Activated T-helper 2 cell treated with anti-CD3 and anti-CD28 coated beads, Interferon-gamma antibody, Interleukin-2, Interleukin-4, amounts not matched to agents 10 μg/mL and 5 μg/mL and 100 μg/mL, durations not matched to agents 14 hours and 24 hours and 36 hours (primary cell): ENCODE measurements at regions of chr6 and their contacts with region 1.

Region 1: DNA sequence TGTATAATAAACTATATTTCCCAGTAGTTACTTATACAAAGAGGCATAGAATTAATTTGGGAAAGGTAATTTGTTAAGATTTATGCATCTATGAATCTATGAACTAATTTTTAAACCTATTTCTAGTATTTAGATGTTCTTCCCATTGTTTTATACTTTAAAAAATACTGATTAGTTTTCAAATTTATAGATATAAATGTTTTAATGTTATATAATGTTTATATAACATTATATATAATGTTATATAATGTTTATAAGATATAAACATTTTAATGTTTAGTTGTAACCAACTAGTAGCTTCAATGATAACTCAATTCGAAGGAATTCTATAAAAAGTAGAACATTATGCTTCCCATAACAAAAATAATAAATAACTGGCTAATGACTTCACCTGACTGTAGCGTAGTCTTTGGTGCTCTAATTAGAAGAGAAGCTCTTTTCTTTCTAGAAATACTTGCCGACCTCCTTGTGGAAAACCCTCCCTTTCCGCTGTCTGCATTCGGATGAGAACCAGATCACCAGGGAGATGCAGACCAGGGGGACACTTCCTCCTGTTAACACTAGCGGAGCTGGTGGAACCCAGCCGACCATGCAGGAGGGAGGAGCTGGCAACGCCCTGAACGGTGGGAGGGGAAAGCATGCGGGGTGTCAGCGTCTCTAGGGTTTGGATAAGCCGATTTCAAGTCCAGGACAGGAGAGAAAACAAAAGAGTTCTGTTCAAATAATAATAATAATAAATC is 158.4 kb downstream of the OR2B2 start:
- DNase-seq: peak; percentile 70
- H3K4me3 Mint-ChIP-seq: peak overlapping the region; percentile 95
- H3K27ac Mint-ChIP-seq: peak overlapping the region; percentile 84
- H3K4me1 Mint-ChIP-seq: peaks cover 46% of the 10 kb centered on the region
- H3K27me3 Mint-ChIP-seq: no peaks in the 10 kb centered on the region

Region 2: GRCh38 chr6:27126815-27127537 is 626.9 kb before region 1 on chr6:
- intact Hi-C with region 1: loop called (anchors 2 kb)
- DNase-seq: peak; percentile 78
- H3K4me3 Mint-ChIP-seq: peak overlapping the region; percentile 84
- H3K27ac Mint-ChIP-seq: peak overlapping the region; percentile 91
- H3K4me1 Mint-ChIP-seq: peaks cover 39% of the 10 kb centered on the region
- H3K27me3 Mint-ChIP-seq: no peaks in the 10 kb centered on the region

Region 3: DNA sequence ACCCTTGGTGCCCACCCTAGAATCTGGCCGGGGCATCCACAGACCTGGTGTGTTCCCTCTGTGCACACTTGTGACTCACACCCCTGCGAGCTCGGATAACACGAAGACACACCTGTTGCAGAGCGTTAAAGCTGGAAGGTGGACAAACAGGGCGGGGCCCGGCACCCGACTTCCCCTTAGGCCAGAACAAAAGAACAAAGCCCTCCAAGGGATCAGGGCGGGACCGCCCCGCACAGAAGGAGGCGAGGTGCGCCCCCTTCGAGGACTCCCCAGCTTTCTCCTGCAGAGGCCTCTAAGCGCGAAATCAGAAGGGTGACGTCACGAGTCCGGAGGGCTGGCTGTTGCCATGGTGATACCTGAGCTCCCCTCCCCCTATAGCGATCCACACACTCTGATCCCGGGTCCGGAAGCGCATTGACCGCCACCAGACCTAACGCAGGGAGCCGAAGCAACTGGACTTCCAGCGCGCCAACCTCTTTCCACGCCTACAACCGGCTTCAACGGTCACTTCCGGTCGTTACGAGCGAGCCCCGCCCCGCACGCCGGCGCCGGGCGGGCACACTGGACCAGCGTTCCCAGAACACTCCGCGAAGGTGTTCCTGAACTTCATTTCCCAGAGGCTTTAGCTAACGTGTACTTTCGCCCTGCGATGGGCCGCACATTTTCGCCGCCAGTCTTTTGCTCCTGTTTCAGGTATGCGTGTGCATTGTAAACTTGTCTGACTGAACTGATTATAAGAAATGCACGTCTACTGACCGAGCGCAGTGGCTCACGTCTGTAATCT is 281.0 kb before region 1 on chr6 and contains the start of gene ZNF184:
- intact Hi-C with region 1: loop called (anchors 1 kb)
- DNase-seq: peak; percentile 87
- H3K4me3 Mint-ChIP-seq: peak within 1 kb of the TSS; percentile 92
- H3K27ac Mint-ChIP-seq: peak within 1 kb of the TSS; percentile 84
- H3K4me1 Mint-ChIP-seq: peaks cover 38% of the 10 kb centered on the region
- H3K27me3 Mint-ChIP-seq: peaks cover 3% of the 10 kb centered on the region
- total RNA-seq, gene ZNF184: 8.4 and 9.2 TPM in 2 replicates

Region 4: DNA sequence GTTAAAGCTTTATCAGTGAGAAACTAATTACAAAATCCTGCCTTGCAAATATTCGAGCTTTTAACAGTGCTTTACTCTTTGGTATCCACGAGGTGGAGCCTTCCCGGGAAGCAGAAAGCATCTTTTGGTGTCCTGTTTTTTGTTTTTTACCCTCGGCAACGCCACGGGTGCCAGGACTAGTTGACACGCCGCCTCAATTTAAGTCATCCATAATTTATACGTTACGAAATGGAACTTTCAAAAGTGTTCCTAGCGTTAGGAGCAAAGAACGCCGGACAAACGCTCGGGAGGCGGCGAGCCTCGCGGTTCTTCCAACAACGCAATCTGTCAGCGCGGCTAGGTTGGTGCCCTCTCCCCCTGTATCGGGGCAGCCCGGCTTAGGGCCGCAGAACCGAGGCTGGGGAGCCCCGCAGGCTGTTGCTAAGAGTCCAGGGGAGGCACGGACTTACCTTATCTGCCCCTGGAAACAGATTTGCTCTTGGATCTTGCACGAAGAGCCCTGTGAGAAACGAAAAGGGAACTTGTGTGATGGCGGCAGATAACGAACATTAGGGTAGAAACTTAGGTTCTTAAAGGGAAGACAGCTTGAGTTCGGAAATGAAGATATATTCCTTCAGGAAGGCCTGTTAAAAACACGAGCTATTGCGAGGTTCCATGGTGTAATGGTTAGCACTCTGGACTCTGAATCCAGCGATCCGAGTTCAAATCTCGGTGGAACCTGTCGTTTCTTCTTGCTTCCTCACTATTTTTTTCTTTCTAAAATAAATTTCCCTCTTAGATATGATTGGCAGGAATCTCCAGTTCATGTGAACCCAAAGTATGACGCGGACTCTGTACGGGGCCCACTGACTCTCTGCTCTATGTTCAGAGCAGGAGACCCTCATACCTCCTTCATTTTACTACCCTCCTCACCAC is 234.7 kb before region 1 on chr6:
- intact Hi-C with region 1: loop called (anchors 2 kb)
- DNase-seq: peak; percentile 30
- H3K4me3 Mint-ChIP-seq: peak overlapping the region; percentile 79
- H3K27ac Mint-ChIP-seq: peak overlapping the region; percentile 62
- H3K4me1 Mint-ChIP-seq: peaks cover 11% of the 10 kb centered on the region
- H3K27me3 Mint-ChIP-seq: peaks cover 30% of the 10 kb centered on the region

Region 5: DNA sequence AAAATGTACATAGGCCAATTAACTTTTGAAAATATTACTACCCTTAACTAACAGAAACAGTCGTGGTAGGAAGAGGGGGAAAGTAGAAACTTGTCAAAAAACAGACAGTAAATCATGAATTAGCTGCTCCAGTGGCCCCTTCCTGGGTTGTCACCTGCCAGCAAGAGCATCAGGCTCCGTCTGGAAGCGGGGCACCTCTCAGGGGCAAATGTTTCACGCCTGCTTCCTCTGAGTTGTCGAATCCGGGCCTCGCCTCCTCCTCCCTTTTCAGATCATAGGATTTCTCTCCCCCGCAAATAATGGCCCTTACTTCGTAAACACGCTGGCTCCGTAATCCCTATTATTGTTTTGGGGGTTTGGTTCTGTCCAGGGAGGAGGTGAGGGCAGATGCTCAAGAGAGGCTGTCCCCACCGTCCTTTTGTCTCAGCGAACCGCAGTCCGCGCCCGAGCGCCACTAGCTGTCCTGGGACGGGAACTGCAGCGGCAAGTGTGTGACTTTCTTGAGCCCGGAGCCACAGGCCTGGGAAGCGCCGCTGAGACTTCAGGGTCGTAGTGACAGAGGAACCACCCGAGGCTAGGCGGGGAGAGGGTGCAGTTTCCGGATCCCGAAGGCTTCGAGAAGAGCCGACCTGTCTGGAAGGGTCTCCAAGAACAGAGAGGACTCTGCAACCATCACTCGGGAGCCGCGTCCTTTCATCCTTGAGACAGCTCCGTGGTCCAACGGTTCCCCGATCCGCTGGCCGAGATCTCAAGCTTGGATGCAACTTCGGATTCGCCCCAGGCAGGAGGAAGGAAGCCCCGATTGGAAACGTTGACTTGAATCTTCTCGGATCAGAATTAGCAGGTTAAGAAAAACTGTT is 66.5 kb before region 1 on chr6:
- intact Hi-C with region 1: loop called (anchors 1 kb)
- DNase-seq: peak; percentile 73
- H3K4me3 Mint-ChIP-seq: peak overlapping the region; percentile 88
- H3K27ac Mint-ChIP-seq: peak overlapping the region; percentile 68
- H3K4me1 Mint-ChIP-seq: peaks cover 16% of the 10 kb centered on the region
- H3K27me3 Mint-ChIP-seq: peaks cover 17% of the 10 kb centered on the region

Region 6: DNA sequence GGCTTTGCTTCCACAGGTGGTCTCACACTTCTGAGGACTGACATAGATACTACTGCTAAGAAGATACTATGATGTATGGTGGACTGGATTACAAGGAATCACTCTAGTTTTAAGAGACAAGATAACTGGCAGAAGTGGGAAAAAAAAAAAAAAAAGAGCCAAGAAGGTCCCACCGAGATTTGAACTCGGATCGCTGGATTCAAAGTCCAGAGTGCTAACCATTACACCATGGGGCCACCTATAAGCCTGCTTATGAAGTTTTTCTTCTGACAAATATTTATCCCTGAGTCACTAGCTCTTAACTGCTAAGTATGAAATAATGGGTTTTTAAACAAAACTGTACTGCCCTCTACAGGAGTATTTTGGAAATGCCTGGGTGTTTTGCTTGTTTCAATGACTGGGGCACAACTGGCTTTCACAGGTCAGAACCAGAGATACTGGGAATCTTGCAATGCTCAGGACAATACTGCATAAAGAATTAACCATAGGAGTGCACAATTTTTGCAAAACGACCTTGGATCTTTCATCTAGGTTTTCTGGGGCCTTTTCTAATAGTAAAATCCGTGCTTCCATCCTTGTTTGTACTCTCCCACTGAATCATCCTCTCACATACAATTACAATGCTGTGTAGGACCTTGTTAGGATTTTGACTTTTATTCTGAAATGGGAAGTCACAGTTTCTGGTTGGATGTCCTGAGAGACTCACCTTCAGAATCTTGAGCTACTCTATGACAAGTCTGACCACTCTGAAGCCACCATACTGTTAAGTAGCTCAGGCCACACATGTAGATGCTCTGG is 42.1 kb after region 1 on chr6:
- intact Hi-C with region 1: loop called (anchors 2 kb)
- DNase-seq: peak; percentile 48
- H3K4me3 Mint-ChIP-seq: no peak overlapping the region
- H3K27ac Mint-ChIP-seq: peak overlapping the region; percentile 8
- H3K4me1 Mint-ChIP-seq: peaks cover 47% of the 10 kb centered on the region
- H3K27me3 Mint-ChIP-seq: peaks cover 8% of the 10 kb centered on the region